ENCODE measurements at regions of chr4 and their contacts with region 1.

Region 1: GRCh38 chr4:152663203-152664066 is 16.4 kb downstream of the TMEM154 start:
- DNase-seq: peak; percentile 82
- ATAC-seq: peak; percentile 67
- H3K4me3 ChIP-seq: peak overlapping the region; percentile 30 to 55 (median 52)
- H3K4me3 Mint-ChIP-seq: peak overlapping the region; percentile 77
- H3K27ac ChIP-seq: peak overlapping the region; percentile 84
- H3K27ac Mint-ChIP-seq: peak overlapping the region; percentile 89
- H3K4me1 ChIP-seq: peaks cover 94% of the 10 kb centered on the region in 2 donors
- H3K4me1 Mint-ChIP-seq: peaks cover 91% of the 10 kb centered on the region
- H3K27me3 ChIP-seq: no peaks in the 10 kb centered on the region
- H3K27me3 Mint-ChIP-seq: no peaks in the 10 kb centered on the region
- CTCF ChIP-seq: no peak

Region 2: GRCh38 chr4:150805183-150806025 is 1858.0 kb before region 1 on chr4:
- CTCF ChIA-PET with region 1: no interaction called
- POLR2A ChIA-PET with region 1: no interaction called
- intact Hi-C with region 1: no loop called
- DNase-seq: no peak
- ATAC-seq: no peak
- H3K4me3 ChIP-seq: no peak overlapping the region
- H3K4me3 Mint-ChIP-seq: no peak overlapping the region
- H3K27ac ChIP-seq: no peak overlapping the region
- H3K27ac Mint-ChIP-seq: no peak overlapping the region
- H3K4me1 ChIP-seq: no peaks in the 10 kb centered on the region
- H3K4me1 Mint-ChIP-seq: no peaks in the 10 kb centered on the region
- H3K27me3 ChIP-seq: no peaks in the 10 kb centered on the region
- H3K27me3 Mint-ChIP-seq: no peaks in the 10 kb centered on the region
- CTCF ChIP-seq: no peak

Region 3: DNA sequence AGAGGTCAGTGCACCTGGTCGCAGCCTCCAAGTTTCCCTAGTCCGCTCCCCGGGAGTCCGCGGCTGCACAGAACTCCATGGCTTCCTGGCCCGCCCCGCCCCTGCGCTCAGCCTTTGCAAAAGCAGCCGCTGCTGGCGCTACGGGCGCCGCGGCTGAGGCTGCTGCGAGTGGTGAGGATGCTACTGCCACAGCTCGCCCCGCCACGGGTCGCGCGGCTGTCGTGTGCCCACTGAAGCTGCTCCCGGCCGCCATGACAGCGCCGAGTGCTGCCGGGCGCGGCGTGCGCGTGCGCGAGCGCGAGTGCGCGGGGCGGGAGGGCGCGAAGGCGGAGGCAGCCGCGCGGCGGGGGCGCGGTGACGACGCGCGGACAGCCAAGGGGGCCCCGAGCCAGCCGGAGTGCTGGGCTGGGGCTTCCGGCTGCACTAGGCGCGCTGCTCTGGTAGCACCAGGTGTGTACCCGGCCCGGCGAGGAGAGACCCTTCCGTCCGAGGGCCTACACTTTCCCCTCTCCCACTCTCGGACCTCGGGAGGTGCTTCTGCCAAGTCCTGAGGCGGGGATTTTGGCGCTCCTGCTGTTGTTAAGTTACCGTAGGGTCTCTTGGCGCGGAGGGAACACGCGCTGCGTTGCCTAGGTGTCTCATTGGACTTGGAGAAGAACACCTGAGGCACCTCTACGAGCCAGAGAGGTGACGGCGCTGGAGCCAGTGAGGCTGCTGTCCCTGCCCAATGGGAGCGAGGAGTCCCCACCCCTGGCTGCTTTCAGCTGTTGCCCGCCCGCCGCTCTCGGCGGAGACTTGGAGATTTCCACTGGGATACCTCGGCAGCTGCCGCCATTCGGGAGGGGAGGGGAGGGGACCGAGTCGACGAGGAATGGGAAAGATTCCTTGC is 1647.7 kb before region 1 on chr4:
- CTCF ChIA-PET with region 1: no interaction called
- POLR2A ChIA-PET with region 1: no interaction called
- intact Hi-C with region 1: loop called (anchors 10 kb)
- DNase-seq: peak; percentile 92
- ATAC-seq: peak; percentile 77
- H3K4me3 ChIP-seq: peak overlapping the region; percentile 77 to 97 (median 91)
- H3K4me3 Mint-ChIP-seq: peak overlapping the region; percentile 100
- H3K27ac ChIP-seq: peak overlapping the region; percentile 89 to 95
- H3K27ac Mint-ChIP-seq: peak overlapping the region; percentile 99
- H3K4me1 ChIP-seq: peaks cover 29 to 32% of the 10 kb centered on the region in 2 donors
- H3K4me1 Mint-ChIP-seq: peaks cover 33% of the 10 kb centered on the region
- H3K27me3 ChIP-seq: no peaks in the 10 kb centered on the region
- H3K27me3 Mint-ChIP-seq: no peaks in the 10 kb centered on the region
- CTCF ChIP-seq: no peak

Region 4: DNA sequence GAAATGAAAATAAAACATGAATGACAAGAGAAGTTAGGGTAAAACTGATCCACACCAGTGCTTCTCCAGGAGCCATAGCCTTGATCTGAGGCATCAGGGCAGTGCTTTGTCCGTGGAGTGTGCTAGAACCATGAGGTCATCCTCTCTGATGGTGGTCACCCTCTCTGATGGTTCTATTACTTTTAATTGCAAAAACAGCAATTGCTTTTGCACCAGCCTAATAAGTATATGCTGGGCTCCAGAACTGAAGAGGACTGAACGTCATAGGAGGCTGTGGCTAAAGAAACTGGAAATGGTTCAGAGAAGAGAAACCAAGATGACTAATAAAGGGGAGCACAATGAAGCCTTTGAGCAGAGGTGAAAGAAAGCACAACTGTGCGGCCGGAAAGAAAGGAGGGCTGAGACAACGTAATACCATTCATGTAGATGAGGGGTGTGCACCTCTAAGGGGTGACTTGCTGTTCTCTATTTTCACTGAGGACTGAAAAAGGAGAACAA is 33.4 kb after region 1 on chr4:
- CTCF ChIA-PET with region 1: no interaction called
- POLR2A ChIA-PET with region 1: no interaction called
- intact Hi-C with region 1: loop called (anchors 1 kb)
- DNase-seq: peak; percentile 86
- ATAC-seq: peak; percentile 99
- H3K4me3 ChIP-seq: no peak overlapping the region
- H3K4me3 Mint-ChIP-seq: peak overlapping the region; percentile 55
- H3K27ac ChIP-seq: peak overlapping the region; percentile 55 to 62
- H3K27ac Mint-ChIP-seq: peak overlapping the region; percentile 91
- H3K4me1 ChIP-seq: peaks cover 17 to 30% of the 10 kb centered on the region in 2 donors
- H3K4me1 Mint-ChIP-seq: peaks cover 43% of the 10 kb centered on the region
- H3K27me3 ChIP-seq: no peaks in the 10 kb centered on the region
- H3K27me3 Mint-ChIP-seq: no peaks in the 10 kb centered on the region
- CTCF ChIP-seq: no peak

Region 5: DNA sequence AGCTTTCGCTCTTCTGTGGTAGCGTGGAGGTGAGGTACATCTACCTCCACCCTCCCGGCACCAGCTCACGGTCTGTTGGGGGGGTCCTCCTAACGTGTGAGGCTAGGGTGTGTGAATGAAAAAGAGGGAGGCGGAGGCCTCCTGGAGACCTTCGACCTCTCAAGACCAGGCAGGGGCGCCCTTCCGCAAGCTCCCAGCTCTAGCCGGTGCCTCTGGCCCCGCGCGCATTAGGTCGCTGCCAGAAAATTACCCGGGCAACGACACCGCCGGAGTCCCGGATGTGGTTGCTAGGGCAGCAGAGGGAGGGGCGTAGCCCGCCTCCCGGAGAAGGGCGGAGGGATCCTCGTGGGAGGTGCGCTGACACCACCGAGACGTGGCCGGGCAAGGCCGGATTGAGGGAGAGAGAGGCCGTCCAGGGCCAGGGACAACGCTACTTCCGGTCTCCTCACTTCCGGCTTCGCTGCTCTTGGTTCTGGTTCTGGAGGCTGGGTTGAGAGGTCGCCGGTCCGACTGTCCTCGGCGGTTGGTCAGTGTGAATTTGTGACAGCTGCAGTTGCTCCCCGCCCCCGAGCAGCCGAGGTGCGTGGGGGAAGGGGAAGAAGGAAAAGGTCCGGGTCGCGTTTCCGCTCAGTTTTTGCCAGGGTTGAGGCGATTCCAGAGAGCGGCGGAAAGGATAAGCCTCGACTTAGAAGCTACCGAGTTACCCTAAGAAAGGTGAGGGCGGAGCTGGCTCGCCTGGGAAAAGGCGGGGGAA is 116.3 kb after region 1 on chr4 and contains the starts of genes ARFIP1 and TIGD4:
- CTCF ChIA-PET with region 1: interaction called, 3 read pairs
- POLR2A ChIA-PET with region 1: no interaction called
- intact Hi-C with region 1: loop called (anchors 5 kb)
- DNase-seq: peak; percentile 95
- ATAC-seq: peak; percentile 89
- H3K4me3 ChIP-seq: peak within 1 kb of the TSS; percentile 59 to 95 (median 90)
- H3K4me3 Mint-ChIP-seq: peak within 1 kb of the TSS; percentile 98
- H3K27ac ChIP-seq: peak within 1 kb of the TSS; percentile 60 to 79
- H3K27ac Mint-ChIP-seq: peak within 1 kb of the TSS; percentile 93
- H3K4me1 ChIP-seq: peaks cover 20 to 25% of the 10 kb centered on the region in 2 donors
- H3K4me1 Mint-ChIP-seq: peaks cover 51% of the 10 kb centered on the region
- H3K27me3 ChIP-seq: no peaks in the 10 kb centered on the region
- H3K27me3 Mint-ChIP-seq: peaks cover 5% of the 10 kb centered on the region
- CTCF ChIP-seq: peak; percentile 9
- total RNA-seq, gene ARFIP1: 23.5 and 27.0 TPM in 2 replicates
- total RNA-seq, gene TIGD4: 0.36 and 0.59 TPM in 2 replicates

Measured in B cell (primary cell).